ENCODE measurements at regions of chr1 and their contacts with region 1.

Region 1: DNA sequence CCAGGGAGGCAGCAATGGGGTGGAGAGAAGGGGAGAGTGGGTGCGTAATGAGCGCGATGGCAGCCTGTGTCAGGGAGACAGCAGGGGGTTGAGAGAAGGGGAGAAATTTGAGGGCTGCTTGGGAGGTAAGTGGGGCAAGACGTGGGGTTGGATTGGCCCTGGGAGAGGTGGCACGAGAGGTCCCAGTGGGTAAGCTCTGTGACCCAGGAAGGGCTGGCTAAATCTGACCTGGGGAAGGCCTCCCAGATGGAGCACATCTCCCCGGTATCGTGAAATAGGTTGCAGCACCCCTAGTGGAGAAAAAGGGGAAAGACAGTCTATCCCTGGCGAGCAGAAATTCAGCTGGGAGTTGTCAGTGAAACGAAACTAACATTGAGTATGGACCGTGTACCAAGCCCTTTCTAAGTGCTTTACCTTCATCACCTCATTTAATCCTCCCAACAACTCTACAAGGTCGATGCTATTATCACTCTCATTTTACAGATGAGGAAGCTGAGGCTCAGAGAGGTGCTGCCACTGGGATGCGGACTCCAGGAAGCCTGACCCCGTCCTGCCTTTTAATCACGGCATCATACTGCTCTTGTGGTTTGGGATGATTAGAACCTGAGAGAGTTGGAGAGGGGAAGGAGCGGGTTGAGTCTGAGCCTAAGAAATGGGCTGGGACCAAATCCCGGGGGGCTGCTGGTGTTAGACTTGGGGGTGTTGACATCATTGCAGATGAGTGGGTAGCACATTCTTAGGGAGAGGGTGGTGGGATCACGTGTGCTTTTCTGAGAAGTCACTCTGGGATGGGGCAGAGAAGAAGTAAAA is 56.6 kb upstream of the RPL11 start:
- DNase-seq: no peak
- ATAC-seq: peak; percentile 40

Region 2: DNA sequence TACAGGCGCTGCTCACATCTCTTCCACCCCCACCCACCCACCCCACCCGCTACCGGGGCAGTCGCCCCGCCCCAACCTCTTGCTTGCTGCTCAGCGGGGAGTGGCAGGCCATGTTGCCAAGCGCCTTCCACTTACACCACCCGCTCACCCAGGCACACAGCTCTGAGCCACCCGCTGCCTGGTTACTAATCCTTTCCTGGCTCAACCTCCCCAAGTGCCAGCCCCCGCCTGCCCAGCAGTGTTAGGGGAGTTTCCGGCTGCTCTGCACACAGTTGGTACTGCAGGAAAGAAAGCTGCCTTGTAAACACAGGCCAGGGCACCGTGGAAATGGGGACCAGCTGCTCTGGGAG is 718.6 kb before region 1 on chr1:
- intact Hi-C with region 1: no loop called
- DNase-seq: no peak
- ATAC-seq: no peak

Region 3: GRCh38 chr1:23496490-23497181 is 138.4 kb before region 1 on chr1:
- intact Hi-C with region 1: loop called (anchors 5 kb)
- DNase-seq: no peak
- ATAC-seq: no peak

Region 4: GRCh38 chr1:23539698-23540266 is 95.3 kb before region 1 on chr1:
- intact Hi-C with region 1: loop called (anchors 1 kb)
- DNase-seq: peak; percentile 91
- ATAC-seq: peak; percentile 87

Region 5: GRCh38 chr1:23691499-23692307 is 56.7 kb after region 1 on chr1 and contains the start of gene RPL11:
- intact Hi-C with region 1: no loop called
- DNase-seq: peak; percentile 95
- ATAC-seq: peak; percentile 100
- total RNA-seq, gene RPL11: 681 TPM

Measured in Right ventricle myocardium inferior (tissue), 1 donor.